ENCODE measurements at regions of chr11 and their contacts with region 1.

Region 1: GRCh38 chr11:14358729-14359439 is at the start of gene RRAS2:
- DNase-seq: peak; percentile 58 to 90 (median 80)
- ATAC-seq: peak; percentile 94
- H3K4me3 ChIP-seq: peak within 1 kb of the TSS; percentile 66 to 70
- H3K4me3 Mint-ChIP-seq: peak within 1 kb of the TSS; percentile 88
- H3K27ac ChIP-seq: peak within 1 kb of the TSS; percentile 19 to 64
- H3K27ac Mint-ChIP-seq: peak within 1 kb of the TSS; percentile 83
- H3K4me1 ChIP-seq: peaks cover 17% of the 10 kb centered on the region
- H3K4me1 Mint-ChIP-seq: peaks cover 35% of the 10 kb centered on the region
- H3K27me3 ChIP-seq: no peaks in the 10 kb centered on the region
- H3K27me3 Mint-ChIP-seq: no peaks in the 10 kb centered on the region
- CTCF ChIP-seq: no peak
- total RNA-seq, gene RRAS2: 38.5 to 40.6 TPM

Region 2: DNA sequence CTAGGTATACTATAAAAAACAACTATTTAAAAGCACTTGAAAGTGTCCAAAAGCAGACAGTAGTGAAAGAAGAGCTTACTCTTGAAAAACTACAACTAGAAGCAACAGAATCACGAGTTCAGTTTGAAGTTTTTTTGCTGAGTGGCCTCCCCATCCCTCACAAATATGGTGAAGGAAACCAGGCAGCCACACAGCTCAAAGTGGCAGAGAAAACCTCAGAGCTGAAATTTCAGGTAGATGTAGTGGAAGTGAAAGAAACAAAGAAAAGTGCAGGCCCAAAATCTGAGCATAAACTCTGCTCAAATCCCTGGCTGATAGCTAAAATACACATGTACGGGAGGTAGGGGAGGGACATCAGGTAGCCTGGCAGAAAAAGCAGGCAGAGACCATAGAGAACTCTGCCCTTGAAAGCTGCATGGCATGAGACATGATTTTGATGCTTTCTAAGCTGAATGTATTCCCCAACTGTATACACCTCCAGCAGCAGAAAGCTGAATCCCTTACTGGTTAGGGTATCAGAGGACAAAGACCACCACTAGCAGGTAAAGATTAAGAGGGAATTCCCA is 908.0 kb before region 1 on chr11:
- CTCF ChIA-PET with region 1: no interaction called
- POLR2A ChIA-PET with region 1: no interaction called
- intact Hi-C with region 1: loop called in 1 of 2 experiments (anchors 10 kb)
- DNase-seq: peak in 1 of 9 experiments; percentile 20
- ATAC-seq: peak; percentile 26
- H3K4me3 ChIP-seq: no peak overlapping the region
- H3K4me3 Mint-ChIP-seq: no peak overlapping the region
- H3K27ac ChIP-seq: no peak overlapping the region
- H3K27ac Mint-ChIP-seq: no peak overlapping the region
- H3K4me1 ChIP-seq: peaks cover 7% of the 10 kb centered on the region
- H3K4me1 Mint-ChIP-seq: peaks cover 55% of the 10 kb centered on the region
- H3K27me3 ChIP-seq: no peaks in the 10 kb centered on the region
- H3K27me3 Mint-ChIP-seq: no peaks in the 10 kb centered on the region
- CTCF ChIP-seq: no peak

Region 3: GRCh38 chr11:14132312-14132711 is 226.6 kb before region 1 on chr11:
- CTCF ChIA-PET with region 1: no interaction called
- POLR2A ChIA-PET with region 1: no interaction called
- intact Hi-C with region 1: no loop called
- DNase-seq: no peak
- ATAC-seq: no peak
- H3K4me3 ChIP-seq: no peak overlapping the region
- H3K4me3 Mint-ChIP-seq: no peak overlapping the region
- H3K27ac ChIP-seq: no peak overlapping the region
- H3K27ac Mint-ChIP-seq: no peak overlapping the region
- H3K4me1 ChIP-seq: no peaks in the 10 kb centered on the region
- H3K4me1 Mint-ChIP-seq: no peaks in the 10 kb centered on the region
- H3K27me3 ChIP-seq: no peaks in the 10 kb centered on the region
- H3K27me3 Mint-ChIP-seq: no peaks in the 10 kb centered on the region
- CTCF ChIP-seq: no peak

Region 4: DNA sequence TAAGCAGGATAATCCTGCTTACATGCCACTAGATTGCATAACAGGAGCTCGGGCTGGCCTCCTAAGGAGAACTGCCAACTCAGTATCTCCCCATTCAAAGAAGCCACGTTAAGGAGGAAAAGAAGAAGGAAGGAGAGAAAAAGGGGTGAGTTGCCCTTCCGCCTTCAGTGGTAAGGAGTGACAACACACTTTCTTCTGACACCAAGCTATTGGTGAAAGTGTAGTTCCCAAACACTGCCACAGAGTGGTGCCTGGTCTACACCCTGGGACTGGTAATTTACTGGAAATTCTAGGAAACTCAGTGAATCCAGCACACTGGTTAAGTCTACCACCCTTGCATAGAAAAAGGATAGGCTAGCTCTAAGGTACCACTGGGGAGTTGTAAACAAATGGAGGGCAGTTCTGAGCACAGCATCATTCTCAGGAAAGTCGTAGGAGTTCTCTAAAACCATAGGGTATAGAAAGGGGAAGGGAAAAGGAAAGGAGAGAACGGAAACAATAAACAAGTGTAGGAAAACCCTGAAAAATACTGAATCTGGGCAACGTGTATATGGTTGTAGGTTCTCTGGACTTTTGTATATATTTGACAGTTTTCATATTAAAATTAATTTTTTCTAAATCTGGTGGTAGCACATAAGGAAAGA is 58.1 kb before region 1 on chr11:
- CTCF ChIA-PET with region 1: interaction called, 3 read pairs
- POLR2A ChIA-PET with region 1: interaction called, 3 read pairs
- intact Hi-C with region 1: loop called in 1 of 2 experiments (anchors 10 kb)
- DNase-seq: peak; percentile 10 to 77 (median 44)
- ATAC-seq: peak; percentile 93
- H3K4me3 ChIP-seq: no peak overlapping the region
- H3K4me3 Mint-ChIP-seq: no peak overlapping the region
- H3K27ac ChIP-seq: no peak overlapping the region
- H3K27ac Mint-ChIP-seq: no peak overlapping the region
- H3K4me1 ChIP-seq: peaks cover 6% of the 10 kb centered on the region
- H3K4me1 Mint-ChIP-seq: peaks cover 22% of the 10 kb centered on the region
- H3K27me3 ChIP-seq: no peaks in the 10 kb centered on the region
- H3K27me3 Mint-ChIP-seq: no peaks in the 10 kb centered on the region
- CTCF ChIP-seq: peak; percentile 66

Region 5: GRCh38 chr11:14320020-14320419 is 38.9 kb before region 1 on chr11:
- CTCF ChIA-PET with region 1: interaction called, 3 read pairs
- POLR2A ChIA-PET with region 1: no interaction called
- intact Hi-C with region 1: loop called (anchors 5 kb)
- DNase-seq: peak in 8 of 9 experiments; percentile 9 to 82 (median 44)
- ATAC-seq: peak; percentile 83
- H3K4me3 ChIP-seq: no peak overlapping the region
- H3K4me3 Mint-ChIP-seq: peak overlapping the region; percentile 0
- H3K27ac ChIP-seq: peak overlapping the region in 1 of 2 experiments; percentile 1
- H3K27ac Mint-ChIP-seq: peak overlapping the region; percentile 25
- H3K4me1 ChIP-seq: peaks cover 21% of the 10 kb centered on the region
- H3K4me1 Mint-ChIP-seq: peaks cover 72% of the 10 kb centered on the region
- H3K27me3 ChIP-seq: no peaks in the 10 kb centered on the region
- H3K27me3 Mint-ChIP-seq: no peaks in the 10 kb centered on the region
- CTCF ChIP-seq: no peak

Region 6: DNA sequence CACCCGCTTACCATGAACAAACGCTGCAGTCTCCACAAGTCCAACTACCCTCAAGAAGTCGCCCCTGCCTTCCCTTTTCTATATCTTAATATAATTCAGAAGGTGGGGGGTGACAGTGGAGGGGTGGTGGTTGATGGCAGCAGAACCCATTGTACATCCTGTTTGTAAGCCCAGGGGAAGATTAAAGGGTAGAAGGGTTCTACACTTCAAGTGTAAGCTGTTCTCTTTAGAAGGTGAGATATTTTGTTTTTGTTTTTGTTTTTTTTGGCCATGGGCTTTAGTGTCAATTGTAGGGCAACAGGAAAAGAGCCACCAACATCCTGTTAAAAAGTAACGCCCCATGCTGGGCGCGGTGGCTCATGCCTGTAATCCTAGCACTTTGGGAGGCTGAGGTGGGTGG is 35.0 kb after region 1 on chr11:
- CTCF ChIA-PET with region 1: no interaction called
- POLR2A ChIA-PET with region 1: no interaction called
- intact Hi-C with region 1: no loop called
- DNase-seq: peak in 2 of 9 experiments; percentile 25 to 64
- ATAC-seq: peak; percentile 29
- H3K4me3 ChIP-seq: no peak overlapping the region
- H3K4me3 Mint-ChIP-seq: no peak overlapping the region
- H3K27ac ChIP-seq: peak overlapping the region in 1 of 2 experiments; percentile 39
- H3K27ac Mint-ChIP-seq: no peak overlapping the region
- H3K4me1 ChIP-seq: no peaks in the 10 kb centered on the region
- H3K4me1 Mint-ChIP-seq: peaks cover 4% of the 10 kb centered on the region
- H3K27me3 ChIP-seq: no peaks in the 10 kb centered on the region
- H3K27me3 Mint-ChIP-seq: no peaks in the 10 kb centered on the region
- CTCF ChIP-seq: no peak

Region 7: GRCh38 chr11:14413307-14414069 is 54.6 kb after region 1 on chr11:
- CTCF ChIA-PET with region 1: no interaction called
- POLR2A ChIA-PET with region 1: no interaction called
- intact Hi-C with region 1: loop called (anchors 1 to 2 kb)
- DNase-seq: peak in 2 of 9 experiments; percentile 13 to 18
- ATAC-seq: no peak
- H3K4me3 ChIP-seq: no peak overlapping the region
- H3K4me3 Mint-ChIP-seq: no peak overlapping the region
- H3K27ac ChIP-seq: no peak overlapping the region
- H3K27ac Mint-ChIP-seq: no peak overlapping the region
- H3K4me1 ChIP-seq: peaks cover 24% of the 10 kb centered on the region
- H3K4me1 Mint-ChIP-seq: peaks cover 49% of the 10 kb centered on the region
- H3K27me3 ChIP-seq: no peaks in the 10 kb centered on the region
- H3K27me3 Mint-ChIP-seq: no peaks in the 10 kb centered on the region
- CTCF ChIP-seq: no peak

Region 8: GRCh38 chr11:14499554-14500180 is 140.8 kb after region 1 on chr11 and contains the start of gene COPB1:
- CTCF ChIA-PET with region 1: no interaction called
- POLR2A ChIA-PET with region 1: no interaction called
- intact Hi-C with region 1: loop called in 1 of 2 experiments (anchors 5 kb)
- DNase-seq: peak; percentile 84 to 96 (median 92)
- ATAC-seq: peak; percentile 94
- H3K4me3 ChIP-seq: peak within 1 kb of the TSS; percentile 74 to 75
- H3K4me3 Mint-ChIP-seq: peak within 1 kb of the TSS; percentile 99
- H3K27ac ChIP-seq: peak within 1 kb of the TSS; percentile 65 to 82
- H3K27ac Mint-ChIP-seq: peak within 1 kb of the TSS; percentile 100
- H3K4me1 ChIP-seq: peaks cover 30% of the 10 kb centered on the region
- H3K4me1 Mint-ChIP-seq: peaks cover 51% of the 10 kb centered on the region
- H3K27me3 ChIP-seq: no peaks in the 10 kb centered on the region
- H3K27me3 Mint-ChIP-seq: no peaks in the 10 kb centered on the region
- CTCF ChIP-seq: no peak
- total RNA-seq, gene COPB1: 108 to 114 TPM

Region 9: DNA sequence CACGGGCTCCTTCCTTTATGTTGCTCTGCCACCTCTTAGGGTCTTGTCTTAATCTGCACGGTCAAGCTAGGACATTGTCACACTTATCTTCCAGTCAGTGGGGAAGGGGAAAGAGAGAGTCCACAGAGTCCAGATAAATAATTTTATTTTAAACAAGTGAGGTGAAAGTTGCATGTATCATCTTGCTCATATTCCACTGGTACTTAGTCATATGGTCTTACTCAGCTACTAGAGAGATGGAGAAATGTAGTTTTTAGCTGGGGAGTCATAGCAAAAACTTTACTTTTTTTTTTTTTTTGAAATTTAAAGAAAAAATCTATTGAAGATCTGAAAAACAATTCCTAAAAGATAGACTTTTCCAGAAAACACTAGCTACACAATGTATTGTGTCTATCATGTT is 313.8 kb after region 1 on chr11:
- CTCF ChIA-PET with region 1: no interaction called
- POLR2A ChIA-PET with region 1: no interaction called
- intact Hi-C with region 1: no loop called
- DNase-seq: no peak
- ATAC-seq: no peak
- H3K4me3 ChIP-seq: no peak overlapping the region
- H3K4me3 Mint-ChIP-seq: no peak overlapping the region
- H3K27ac ChIP-seq: no peak overlapping the region
- H3K27ac Mint-ChIP-seq: peak overlapping the region; percentile 67
- H3K4me1 ChIP-seq: peaks cover 12% of the 10 kb centered on the region
- H3K4me1 Mint-ChIP-seq: peaks cover 79% of the 10 kb centered on the region
- H3K27me3 ChIP-seq: no peaks in the 10 kb centered on the region
- H3K27me3 Mint-ChIP-seq: no peaks in the 10 kb centered on the region
- CTCF ChIP-seq: no peak

Region 10: DNA sequence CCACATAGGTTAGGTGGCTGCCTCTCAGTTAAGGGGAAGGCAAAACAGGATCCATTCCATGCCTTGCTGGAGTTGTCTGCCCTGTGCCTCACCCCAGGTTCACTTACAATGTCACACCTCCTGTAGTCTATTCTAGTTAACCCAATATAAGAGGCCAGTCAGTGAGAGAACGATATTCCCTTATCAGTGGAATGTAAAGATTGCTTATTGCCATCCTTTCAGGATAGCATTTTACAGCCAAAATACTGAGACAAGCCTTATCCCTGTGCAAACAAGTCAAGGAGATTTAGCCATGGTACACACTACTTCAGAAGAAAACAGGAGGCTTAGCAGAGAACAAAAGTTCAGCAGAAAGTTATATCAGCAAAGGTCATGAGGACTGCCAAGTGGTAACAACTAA is 527.6 kb after region 1 on chr11:
- CTCF ChIA-PET with region 1: no interaction called
- POLR2A ChIA-PET with region 1: no interaction called
- intact Hi-C with region 1: loop called (anchors 5 kb)
- DNase-seq: no peak
- ATAC-seq: no peak
- H3K4me3 ChIP-seq: no peak overlapping the region
- H3K4me3 Mint-ChIP-seq: no peak overlapping the region
- H3K27ac ChIP-seq: no peak overlapping the region
- H3K27ac Mint-ChIP-seq: peak overlapping the region; percentile 10
- H3K4me1 ChIP-seq: peaks cover 10% of the 10 kb centered on the region
- H3K4me1 Mint-ChIP-seq: peaks cover 55% of the 10 kb centered on the region
- H3K27me3 ChIP-seq: no peaks in the 10 kb centered on the region
- H3K27me3 Mint-ChIP-seq: no peaks in the 10 kb centered on the region
- CTCF ChIP-seq: no peak